ENCODE measurements at regions of chr11 and their contacts with region 1.

Region 1: DNA sequence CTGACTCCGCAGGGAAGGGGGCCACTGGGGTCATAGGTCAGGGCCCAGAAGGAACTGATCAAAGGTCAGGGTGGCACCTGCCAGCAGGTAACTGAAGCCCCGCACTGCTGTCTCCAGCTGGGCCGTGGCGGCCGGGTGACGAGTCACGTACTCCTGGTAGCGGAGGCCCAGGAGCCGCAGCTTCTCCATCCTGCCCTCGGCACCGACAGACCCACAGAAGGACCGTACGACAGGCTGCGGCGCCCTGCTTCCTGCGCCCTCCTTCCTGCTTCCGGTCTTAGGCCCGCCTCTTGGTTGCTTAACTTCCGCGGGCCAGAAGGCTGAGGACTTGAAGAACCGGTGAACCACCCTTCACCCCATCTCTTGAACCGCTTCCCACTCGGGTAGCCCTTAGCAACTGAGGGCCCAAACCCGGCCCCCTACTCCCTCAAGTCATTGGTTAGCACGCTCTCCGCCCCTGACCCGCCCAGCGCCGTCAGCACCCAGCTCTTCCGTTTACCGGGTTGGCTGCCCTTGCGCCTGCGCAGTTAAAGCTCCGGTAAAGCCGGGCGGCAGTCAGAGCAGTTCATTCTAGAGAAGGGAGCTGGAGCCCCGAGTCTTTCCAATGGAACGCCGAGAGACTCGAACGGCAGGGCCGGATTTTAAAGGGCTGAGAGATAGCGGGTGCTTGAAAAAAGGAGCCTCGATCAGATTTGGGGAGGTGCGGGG is at the start of gene PEX16:
- DNase-seq: peak; percentile 99
- ATAC-seq: peak; percentile 83
- H3K4me3 ChIP-seq: peak within 1 kb of the TSS; percentile 86 to 99 (median 90)
- H3K4me3 Mint-ChIP-seq: peak within 1 kb of the TSS; percentile 92
- H3K27ac ChIP-seq: peak within 1 kb of the TSS; percentile 88 to 95
- H3K27ac Mint-ChIP-seq: peak within 1 kb of the TSS; percentile 94
- H3K4me1 ChIP-seq: peaks cover 44 to 57% of the 10 kb centered on the region in 2 donors
- H3K4me1 Mint-ChIP-seq: peaks cover 64% of the 10 kb centered on the region
- H3K27me3 ChIP-seq: no peaks in the 10 kb centered on the region
- H3K27me3 Mint-ChIP-seq: no peaks in the 10 kb centered on the region
- CTCF ChIP-seq: no peak
- total RNA-seq, gene PEX16: 107 and 113 TPM in 2 replicates

Region 2: DNA sequence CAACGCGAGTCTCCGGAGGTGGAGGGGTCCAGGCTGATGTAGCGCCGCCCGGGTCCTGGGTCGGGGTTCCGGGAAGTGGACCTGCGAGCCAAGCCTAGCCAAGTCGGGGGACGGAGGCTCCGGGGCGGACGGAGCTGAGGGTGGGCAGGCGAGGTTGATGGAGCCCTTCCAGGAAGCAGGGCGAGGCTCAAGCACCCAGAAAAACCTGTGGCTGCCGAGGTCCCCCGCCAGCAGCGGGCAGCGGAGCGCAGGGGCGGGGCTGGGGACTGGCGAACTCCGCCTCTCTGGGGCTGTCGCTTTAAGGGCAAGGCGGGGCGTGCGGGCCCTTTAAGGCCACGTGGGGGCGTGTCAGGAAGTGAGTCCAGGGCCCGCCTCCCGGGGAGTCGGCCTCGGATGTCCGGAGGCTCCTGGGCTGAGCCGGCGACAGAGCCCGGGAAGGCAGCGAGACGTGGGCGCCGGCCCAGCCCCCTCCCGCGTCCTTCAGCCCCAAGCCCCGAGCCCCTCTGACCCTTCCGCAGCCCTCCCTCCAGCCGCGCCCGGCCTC is 112.9 kb before region 1 on chr11 and contains the start of gene SLC35C1:
- CTCF ChIA-PET with region 1: interaction called, 5 read pairs
- POLR2A ChIA-PET with region 1: interaction called, 4 read pairs
- intact Hi-C with region 1: loop called (anchors 1 kb)
- DNase-seq: peak; percentile 95
- ATAC-seq: peak; percentile 96
- H3K4me3 ChIP-seq: peak within 1 kb of the TSS; percentile 42 to 96 (median 92)
- H3K4me3 Mint-ChIP-seq: peak within 1 kb of the TSS; percentile 94
- H3K27ac ChIP-seq: peak within 1 kb of the TSS; percentile 62 to 67
- H3K27ac Mint-ChIP-seq: peak within 1 kb of the TSS; percentile 91
- H3K4me1 ChIP-seq: peaks cover 27 to 35% of the 10 kb centered on the region in 2 donors
- H3K4me1 Mint-ChIP-seq: peaks cover 41% of the 10 kb centered on the region
- H3K27me3 ChIP-seq: no peaks in the 10 kb centered on the region
- H3K27me3 Mint-ChIP-seq: no peaks in the 10 kb centered on the region
- CTCF ChIP-seq: no peak
- total RNA-seq, gene SLC35C1: 12.5 and 13.8 TPM in 2 replicates

Region 3: GRCh38 chr11:45899448-45900173 is 18.2 kb before region 1 on chr11:
- CTCF ChIA-PET with region 1: interaction called, 3 read pairs
- POLR2A ChIA-PET with region 1: no interaction called
- intact Hi-C with region 1: loop called (anchors 1 kb)
- DNase-seq: peak; percentile 89
- ATAC-seq: peak; percentile 82
- H3K4me3 ChIP-seq: peak overlapping the region in 4 of 5 experiments; percentile 37 to 59 (median 50)
- H3K4me3 Mint-ChIP-seq: peak overlapping the region; percentile 81
- H3K27ac ChIP-seq: peak overlapping the region in 1 of 2 donors; percentile 43
- H3K27ac Mint-ChIP-seq: peak overlapping the region; percentile 37
- H3K4me1 ChIP-seq: peaks cover 12 to 17% of the 10 kb centered on the region in 2 donors
- H3K4me1 Mint-ChIP-seq: peaks cover 12% of the 10 kb centered on the region
- H3K27me3 ChIP-seq: peaks cover 0 to 43% (median 21%) of the 10 kb centered on the region in 4 experiments
- H3K27me3 Mint-ChIP-seq: peaks cover 23% of the 10 kb centered on the region
- CTCF ChIP-seq: no peak

Region 4: GRCh38 chr11:46006418-46007070 is 88.8 kb after region 1 on chr11:
- CTCF ChIA-PET with region 1: interaction called, 11 read pairs
- POLR2A ChIA-PET with region 1: no interaction called
- intact Hi-C with region 1: no loop called
- DNase-seq: peak; percentile 79
- ATAC-seq: peak; percentile 82
- H3K4me3 ChIP-seq: no peak overlapping the region
- H3K4me3 Mint-ChIP-seq: no peak overlapping the region
- H3K27ac ChIP-seq: no peak overlapping the region
- H3K27ac Mint-ChIP-seq: no peak overlapping the region
- H3K4me1 ChIP-seq: no peaks in the 10 kb centered on the region
- H3K4me1 Mint-ChIP-seq: peaks cover 1% of the 10 kb centered on the region
- H3K27me3 ChIP-seq: no peaks in the 10 kb centered on the region
- H3K27me3 Mint-ChIP-seq: no peaks in the 10 kb centered on the region
- CTCF ChIP-seq: peak; percentile 84

Region 5: DNA sequence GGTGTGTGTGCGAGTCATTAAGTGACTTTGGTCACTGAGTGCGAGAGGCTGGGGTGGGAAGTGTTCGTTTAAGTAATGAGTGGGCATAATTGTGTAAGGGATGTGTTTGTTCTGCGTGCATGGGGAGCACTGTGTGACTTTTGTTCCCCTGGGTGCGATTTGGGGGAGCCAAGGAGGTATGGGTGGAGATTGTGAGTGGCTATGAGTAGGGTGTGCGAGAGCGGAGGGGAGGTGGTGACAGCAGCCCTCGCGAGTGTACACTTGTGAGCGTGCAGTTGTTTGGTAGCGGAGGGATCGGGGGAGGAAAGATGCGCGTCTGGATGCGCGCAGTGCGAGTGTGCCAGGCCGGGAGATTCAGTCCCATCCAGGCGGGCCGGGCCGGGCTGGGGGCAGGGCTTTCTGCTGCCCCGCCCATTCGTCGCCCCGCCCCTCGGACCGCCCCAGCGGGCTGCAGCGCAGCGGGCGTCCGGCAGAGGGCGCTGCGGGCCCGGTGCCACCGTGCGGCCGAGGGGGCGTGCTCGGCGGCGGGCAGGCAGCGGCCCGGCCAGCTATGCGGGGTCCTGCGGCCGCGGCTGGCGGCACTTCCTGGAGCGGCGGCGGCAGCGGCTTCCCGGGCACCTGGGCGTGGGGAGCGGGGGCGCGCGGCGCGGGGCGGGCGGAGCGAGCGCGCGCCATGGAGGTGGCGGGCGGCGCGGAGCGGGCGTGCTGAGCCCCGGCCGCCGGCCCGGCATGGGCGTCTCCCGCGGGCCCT is 429.3 kb after region 1 on chr11 and contains the start of gene DGKZ:
- CTCF ChIA-PET with region 1: no interaction called
- POLR2A ChIA-PET with region 1: no interaction called
- intact Hi-C with region 1: loop called (anchors 5 kb)
- DNase-seq: peak; percentile 96
- ATAC-seq: peak; percentile 94
- H3K4me3 ChIP-seq: peak within 1 kb of the TSS; percentile 58 to 88 (median 78)
- H3K4me3 Mint-ChIP-seq: peak within 1 kb of the TSS; percentile 91
- H3K27ac ChIP-seq: peak within 1 kb of the TSS in 1 of 2 donors; percentile 64
- H3K27ac Mint-ChIP-seq: peak within 1 kb of the TSS; percentile 83
- H3K4me1 ChIP-seq: peaks cover 38 to 46% of the 10 kb centered on the region in 2 donors
- H3K4me1 Mint-ChIP-seq: peaks cover 53% of the 10 kb centered on the region
- H3K27me3 ChIP-seq: peaks cover 0 to 5% (median 0%) of the 10 kb centered on the region in 4 experiments
- H3K27me3 Mint-ChIP-seq: no peaks in the 10 kb centered on the region
- CTCF ChIP-seq: peak; percentile 73
- total RNA-seq, gene DGKZ: 56.6 and 60.9 TPM in 2 replicates

Region 6: DNA sequence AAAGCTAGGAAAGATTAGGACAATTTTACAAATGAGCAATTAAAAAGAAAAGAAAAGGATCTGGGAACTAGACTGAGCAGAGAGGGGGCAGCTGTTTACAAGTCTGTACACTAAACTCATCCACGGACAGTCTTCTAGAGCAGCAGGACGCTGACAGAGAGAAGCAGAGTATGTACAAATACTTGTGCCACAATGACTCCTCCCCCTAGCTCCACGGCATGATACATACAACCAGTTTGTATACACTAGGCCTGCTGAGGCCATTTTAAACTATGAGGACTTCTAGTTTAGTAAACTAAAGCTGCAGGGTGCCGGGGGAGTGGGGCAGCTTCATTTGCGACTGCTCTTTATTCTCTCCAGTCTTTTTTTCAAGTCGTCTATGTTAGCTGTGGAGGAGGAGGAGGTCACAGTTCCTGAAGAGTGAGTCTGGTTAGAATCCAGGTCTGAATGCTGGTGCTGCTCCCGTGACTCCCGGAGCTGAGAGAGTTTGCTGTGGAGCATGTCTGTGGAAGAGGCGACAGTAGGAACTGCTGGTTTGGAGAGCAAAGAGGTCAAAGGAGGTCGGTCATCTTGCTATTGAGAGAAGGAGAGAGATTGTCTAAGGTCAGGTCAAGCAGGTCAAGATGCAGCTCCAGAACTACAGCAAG is 826.0 kb after region 1 on chr11:
- CTCF ChIA-PET with region 1: no interaction called
- POLR2A ChIA-PET with region 1: no interaction called
- intact Hi-C with region 1: no loop called
- DNase-seq: no peak
- ATAC-seq: no peak
- H3K4me3 ChIP-seq: no peak overlapping the region
- H3K4me3 Mint-ChIP-seq: no peak overlapping the region
- H3K27ac ChIP-seq: no peak overlapping the region
- H3K27ac Mint-ChIP-seq: no peak overlapping the region
- H3K4me1 ChIP-seq: no peaks in the 10 kb centered on the region
- H3K4me1 Mint-ChIP-seq: no peaks in the 10 kb centered on the region
- H3K27me3 ChIP-seq: no peaks in the 10 kb centered on the region
- H3K27me3 Mint-ChIP-seq: no peaks in the 10 kb centered on the region
- CTCF ChIP-seq: no peak

Measured in B cell (primary cell).